ENCODE measurements at regions of chr15 and their contacts with region 1.

Region 1: GRCh38 chr15:67879440-67880129 is 39.7 kb upstream of the RNU6-1 start:
- DNase-seq: peak in 1 of 7 donors; percentile 25
- H3K4me3 ChIP-seq: no peak overlapping the region
- H3K27ac ChIP-seq: no peak overlapping the region
- H3K4me1 ChIP-seq: peaks cover 0 to 13% of the 10 kb centered on the region in 2 donors
- H3K27me3 ChIP-seq: no peaks in the 10 kb centered on the region
- CTCF ChIP-seq: no peak
- POLR2A ChIP-seq: no peak

Region 2: DNA sequence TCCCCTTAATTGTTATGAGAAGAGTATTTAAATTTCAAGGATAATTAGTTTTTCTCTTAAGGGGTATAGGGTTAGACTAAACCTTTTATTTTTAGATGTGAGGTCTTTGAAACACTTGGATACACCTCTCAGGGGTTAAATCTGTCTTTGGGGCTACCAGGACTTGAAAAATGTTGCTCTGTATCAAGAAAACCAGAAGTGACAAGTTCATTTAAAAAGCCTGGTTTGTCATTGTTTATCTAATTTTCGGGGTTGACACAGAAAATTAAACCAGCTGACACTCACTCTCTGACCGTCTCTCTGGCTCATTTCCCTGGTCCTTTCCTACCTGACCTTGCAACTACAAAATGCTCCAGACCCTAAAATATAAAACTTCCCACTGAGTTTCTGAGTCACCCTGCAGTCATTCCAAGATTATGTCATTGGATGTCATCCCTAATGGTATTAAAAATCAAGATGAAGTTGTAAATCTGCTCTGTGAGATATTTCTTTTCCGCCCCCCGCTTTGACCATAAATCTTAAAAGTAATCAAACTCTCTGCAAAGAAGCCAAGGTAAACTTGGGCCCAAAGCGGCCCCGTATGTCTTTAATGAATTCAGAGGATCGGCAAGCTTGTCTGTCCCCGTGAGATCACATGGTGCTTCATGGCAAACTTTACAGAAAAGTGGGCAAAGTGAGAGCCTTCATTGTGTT is 87.2 kb before region 1 on chr15:
- intact Hi-C with region 1: no loop called
- DNase-seq: peak in 2 of 7 donors; percentile 36 to 40
- H3K4me3 ChIP-seq: no peak overlapping the region
- H3K27ac ChIP-seq: no peak overlapping the region
- H3K4me1 ChIP-seq: peaks cover 0 to 11% of the 10 kb centered on the region in 2 donors
- H3K27me3 ChIP-seq: no peaks in the 10 kb centered on the region
- CTCF ChIP-seq: no peak
- POLR2A ChIP-seq: no peak

Region 3: GRCh38 chr15:67945951-67946700 is 66.5 kb after region 1 on chr15:
- intact Hi-C with region 1: loop called in 1 of 2 experiments (anchors 10 kb)
- DNase-seq: peak in 1 of 7 donors; percentile 35
- H3K4me3 ChIP-seq: no peak overlapping the region
- H3K27ac ChIP-seq: peak overlapping the region in 3 of 5 donors; percentile 6 to 83 (median 11)
- H3K4me1 ChIP-seq: peaks cover 4 to 5% of the 10 kb centered on the region in 2 donors
- H3K27me3 ChIP-seq: no peaks in the 10 kb centered on the region
- CTCF ChIP-seq: no peak
- POLR2A ChIP-seq: no peak